Common myeloid progenitor, CD34-positive (primary cell): ENCODE measurements at regions of chr11 and their contacts with region 1.

Region 1: GRCh38 chr11:17000687-17001386 is 13.4 kb downstream of the PLEKHA7 start:
- DNase-seq: no peak
- H3K4me3 ChIP-seq: no peak overlapping the region
- H3K27ac ChIP-seq: no peak overlapping the region
- H3K4me1 ChIP-seq: no peaks in the 10 kb centered on the region
- H3K27me3 ChIP-seq: peaks cover 0 to 2% (median 0%) of the 10 kb centered on the region in 5 experiments

Region 2: DNA sequence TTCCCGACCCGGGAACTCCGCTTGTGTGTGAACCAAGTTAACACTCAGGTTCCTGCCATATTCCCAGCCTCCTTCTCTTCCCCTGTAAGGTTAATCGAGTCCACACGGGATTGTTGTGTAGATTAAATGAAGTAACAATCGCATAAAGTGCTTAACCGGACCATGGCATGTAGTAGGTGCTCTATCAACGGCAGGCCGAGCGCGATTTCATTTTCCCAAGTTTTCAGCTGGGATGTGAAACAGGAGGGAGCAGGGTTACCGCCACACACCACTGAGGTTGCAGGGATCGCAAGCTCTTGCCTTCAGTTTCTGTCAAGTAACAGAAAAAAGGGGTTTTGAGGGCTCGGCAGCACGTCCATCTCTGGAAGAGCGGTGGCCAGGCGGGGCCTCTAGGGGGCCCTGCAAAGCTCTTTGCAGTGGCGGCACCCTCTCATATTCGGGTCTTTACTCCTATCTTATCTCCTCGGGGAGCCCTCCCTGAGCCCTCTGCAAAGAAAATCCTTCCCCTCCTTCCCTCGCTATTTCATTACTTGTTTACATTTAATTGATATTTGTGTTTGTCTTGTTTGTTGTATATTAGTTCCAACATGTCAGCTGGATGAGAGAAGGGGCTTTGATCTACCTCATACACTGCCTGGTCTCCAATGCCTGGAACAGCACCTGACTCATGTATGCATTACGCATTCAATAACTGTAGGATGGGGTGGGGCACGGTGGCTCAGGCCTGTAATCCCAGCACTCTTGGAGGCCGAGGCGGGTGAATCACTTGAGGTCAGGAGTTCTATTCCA is 14.2 kb after region 1 on chr11:
- CTCF ChIA-PET with region 1: interaction called, 11 read pairs
- POLR2A ChIA-PET with region 1: no interaction called
- DNase-seq: peak; percentile 60 to 75 (median 71)
- H3K4me3 ChIP-seq: peak overlapping the region; percentile 52 to 92 (median 70)
- H3K27ac ChIP-seq: no peak overlapping the region
- H3K4me1 ChIP-seq: peaks cover 0 to 14% (median 7%) of the 10 kb centered on the region in 4 experiments
- H3K27me3 ChIP-seq: peaks cover 0 to 29% (median 15%) of the 10 kb centered on the region in 5 experiments